ENCODE measurements at regions of chr9 and their contacts with region 1.

Region 1: DNA sequence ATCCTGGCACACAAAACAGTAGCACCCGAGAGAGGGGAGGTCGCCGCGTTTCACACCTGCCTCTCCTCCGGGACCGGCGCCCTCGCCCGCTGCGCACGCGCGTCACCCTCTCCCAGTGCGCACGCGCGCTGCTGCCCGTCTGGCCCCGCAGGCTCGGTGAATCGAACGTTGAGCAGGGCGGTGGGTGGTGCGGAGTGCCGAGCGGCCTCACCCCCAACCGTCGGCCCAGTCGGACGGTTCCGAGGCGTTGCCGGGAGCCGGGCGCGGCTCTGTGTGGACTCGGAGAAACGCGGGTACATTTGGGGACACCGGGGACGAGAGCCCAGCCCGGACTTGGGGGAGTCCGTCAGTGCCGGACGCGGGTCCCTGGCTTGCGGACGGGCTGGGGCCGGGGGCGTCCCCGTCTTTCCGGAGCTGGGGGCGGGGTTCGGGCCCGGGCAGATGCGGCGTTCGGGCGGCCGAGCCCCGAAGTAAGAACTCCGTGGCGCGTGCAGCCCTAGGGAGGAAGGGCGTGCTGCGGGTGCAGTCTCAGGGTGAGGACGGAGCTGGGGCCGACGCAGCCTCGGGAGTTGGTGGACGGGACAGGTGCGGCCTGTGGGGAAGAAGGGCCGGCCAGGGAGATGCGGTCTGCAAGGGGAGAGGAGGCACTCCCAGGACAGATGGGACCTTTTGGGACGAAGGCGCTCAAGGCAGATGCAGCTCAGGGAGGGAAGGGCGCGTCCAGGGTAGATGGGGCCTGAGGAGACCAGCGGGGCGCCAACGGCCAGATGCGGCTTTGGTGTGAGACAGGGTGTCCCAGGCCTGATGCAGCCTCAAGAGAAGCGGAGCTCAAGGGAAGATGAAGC is at the start of gene POMT1:
- DNase-seq: peak; percentile 76 to 95 (median 87)
- ATAC-seq: peak; percentile 56
- H3K4me3 ChIP-seq: peak within 1 kb of the TSS; percentile 79 to 83
- H3K4me3 Mint-ChIP-seq: peak within 1 kb of the TSS; percentile 94
- H3K27ac ChIP-seq: peak within 1 kb of the TSS; percentile 45 to 50
- H3K27ac Mint-ChIP-seq: peak within 1 kb of the TSS; percentile 93
- H3K4me1 ChIP-seq: peaks cover 43% of the 10 kb centered on the region
- H3K4me1 Mint-ChIP-seq: peaks cover 62% of the 10 kb centered on the region
- H3K27me3 ChIP-seq: no peaks in the 10 kb centered on the region
- H3K27me3 Mint-ChIP-seq: no peaks in the 10 kb centered on the region
- CTCF ChIP-seq: no peak
- total RNA-seq, gene POMT1: 33.9 to 40.8 TPM

Region 2: DNA sequence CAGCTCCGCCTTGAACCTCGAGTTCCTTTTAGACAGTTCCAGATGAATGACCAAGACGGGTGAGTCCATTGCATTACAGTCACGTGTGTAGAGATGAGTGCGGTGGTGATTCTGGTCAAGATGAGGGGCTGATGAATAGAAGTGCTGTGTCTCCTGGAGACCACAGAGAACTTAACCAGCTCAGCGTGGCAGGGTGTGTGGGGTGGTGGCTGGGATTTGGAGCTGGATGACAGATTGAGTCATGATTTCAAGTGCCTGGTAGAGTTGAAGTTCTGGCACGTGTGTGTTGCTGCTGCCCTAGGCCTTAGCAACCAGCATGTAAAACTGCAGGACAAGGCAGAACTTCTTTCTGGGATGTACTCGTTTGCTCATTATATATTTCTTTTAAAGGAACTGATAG is 55.9 kb before region 1 on chr9:
- CTCF ChIA-PET with region 1: no interaction called
- POLR2A ChIA-PET with region 1: no interaction called
- intact Hi-C with region 1: no loop called
- DNase-seq: no peak
- ATAC-seq: no peak
- H3K4me3 ChIP-seq: no peak overlapping the region
- H3K4me3 Mint-ChIP-seq: no peak overlapping the region
- H3K27ac ChIP-seq: no peak overlapping the region
- H3K27ac Mint-ChIP-seq: no peak overlapping the region
- H3K4me1 ChIP-seq: no peaks in the 10 kb centered on the region
- H3K4me1 Mint-ChIP-seq: peaks cover 15% of the 10 kb centered on the region
- H3K27me3 ChIP-seq: no peaks in the 10 kb centered on the region
- H3K27me3 Mint-ChIP-seq: no peaks in the 10 kb centered on the region
- CTCF ChIP-seq: no peak

Region 3: DNA sequence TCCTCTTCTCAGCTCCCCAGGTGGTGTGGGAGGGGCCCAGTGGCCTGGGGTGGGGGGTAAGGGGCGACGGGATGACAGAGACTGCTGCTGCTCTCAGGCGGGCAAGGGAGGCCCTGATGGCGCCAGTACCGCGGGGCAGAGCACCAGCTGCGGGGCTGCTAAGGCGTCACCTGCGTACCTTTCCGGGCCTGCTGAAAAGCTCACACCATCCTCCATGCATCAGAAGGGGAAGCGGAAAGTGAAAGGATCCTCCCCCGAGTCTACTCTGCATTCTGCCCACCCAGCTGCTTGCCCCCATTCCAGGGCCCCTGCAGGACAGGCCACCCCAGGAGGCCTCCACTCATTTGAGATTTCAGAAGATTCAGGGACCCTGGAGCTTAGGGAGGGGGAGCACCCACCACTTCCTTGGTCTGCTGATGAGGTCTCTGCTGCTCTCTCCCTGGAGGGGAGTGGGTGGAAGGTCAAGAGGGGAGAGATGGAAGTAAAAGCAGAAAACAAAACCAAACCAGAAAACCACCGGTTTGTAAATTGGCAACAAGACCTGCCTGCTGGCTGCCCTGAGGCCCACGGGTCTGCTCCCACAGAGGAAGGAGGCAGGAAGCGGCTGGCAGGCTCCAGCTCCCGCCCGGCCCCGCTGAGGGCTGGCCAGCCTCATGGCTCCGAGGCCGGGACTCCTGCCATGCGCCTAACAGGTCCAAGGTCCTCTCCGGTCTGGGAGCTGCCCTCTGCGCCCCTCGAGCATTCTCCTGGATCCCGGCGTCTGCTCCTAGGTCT is 75.9 kb after region 1 on chr9:
- CTCF ChIA-PET with region 1: no interaction called
- POLR2A ChIA-PET with region 1: no interaction called
- intact Hi-C with region 1: loop called in 1 of 2 experiments (anchors 5 kb)
- DNase-seq: peak; percentile 28 to 81 (median 58)
- ATAC-seq: peak; percentile 95
- H3K4me3 ChIP-seq: peak overlapping the region; percentile 2 to 17
- H3K4me3 Mint-ChIP-seq: peak overlapping the region; percentile 66
- H3K27ac ChIP-seq: peak overlapping the region; percentile 52 to 74
- H3K27ac Mint-ChIP-seq: peak overlapping the region; percentile 92
- H3K4me1 ChIP-seq: peaks cover 32% of the 10 kb centered on the region
- H3K4me1 Mint-ChIP-seq: peaks cover 28% of the 10 kb centered on the region
- H3K27me3 ChIP-seq: no peaks in the 10 kb centered on the region
- H3K27me3 Mint-ChIP-seq: no peaks in the 10 kb centered on the region
- CTCF ChIP-seq: no peak